ENCODE measurements at regions of chr3 and their contacts with region 1.

Region 1: DNA sequence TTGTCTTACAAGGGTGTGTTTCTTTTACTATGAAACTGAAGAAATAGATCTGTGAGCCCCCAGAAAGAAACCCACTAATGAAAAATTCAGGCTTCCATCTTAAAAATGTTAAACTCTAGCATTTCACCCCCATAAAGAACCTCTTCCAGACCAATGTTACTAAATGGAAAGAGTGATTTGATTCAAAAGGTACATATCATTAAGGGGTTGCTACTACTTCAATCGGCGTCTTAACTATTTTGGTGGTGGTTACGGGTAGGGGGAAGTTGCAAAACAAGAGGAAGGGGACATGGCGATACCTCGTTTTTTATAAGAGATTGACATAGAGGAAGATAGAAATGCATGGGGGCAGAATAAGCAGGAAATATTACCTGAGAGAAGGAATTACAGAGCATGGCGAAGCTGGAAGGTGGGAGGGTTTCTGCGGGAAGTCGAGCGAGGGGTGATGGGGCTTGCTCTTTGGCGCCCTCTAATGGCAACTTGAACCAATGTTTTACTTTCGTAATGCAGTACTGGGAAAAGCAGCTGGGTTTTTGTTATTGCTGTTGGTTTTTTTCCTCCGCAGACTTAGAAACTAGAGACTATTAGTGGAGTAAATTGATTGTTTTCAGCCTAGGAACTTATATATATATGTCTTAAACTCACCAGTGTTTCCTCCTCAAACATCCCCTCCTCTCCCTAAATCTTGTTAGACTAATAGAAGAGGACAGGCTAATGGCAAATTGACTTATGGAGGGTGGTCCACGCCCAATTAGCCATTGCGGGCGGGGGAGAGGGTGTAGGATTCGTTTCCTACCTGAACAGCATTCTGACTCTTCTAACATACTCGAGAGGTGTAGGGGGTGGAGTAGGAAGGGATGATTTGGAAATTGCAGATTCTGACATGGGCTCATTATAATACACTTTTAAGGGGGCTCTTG is 11.3 kb upstream of the SOX2 start:
- DNase-seq: peak; percentile 78
- H3K4me3 ChIP-seq: peak overlapping the region; percentile 55
- H3K27ac ChIP-seq: no peak overlapping the region
- H3K4me1 ChIP-seq: no peaks in the 10 kb centered on the region; the same call in 1 of the 2 replicates
- H3K27me3 ChIP-seq: peaks cover 70% of the 10 kb centered on the region

Region 2: DNA sequence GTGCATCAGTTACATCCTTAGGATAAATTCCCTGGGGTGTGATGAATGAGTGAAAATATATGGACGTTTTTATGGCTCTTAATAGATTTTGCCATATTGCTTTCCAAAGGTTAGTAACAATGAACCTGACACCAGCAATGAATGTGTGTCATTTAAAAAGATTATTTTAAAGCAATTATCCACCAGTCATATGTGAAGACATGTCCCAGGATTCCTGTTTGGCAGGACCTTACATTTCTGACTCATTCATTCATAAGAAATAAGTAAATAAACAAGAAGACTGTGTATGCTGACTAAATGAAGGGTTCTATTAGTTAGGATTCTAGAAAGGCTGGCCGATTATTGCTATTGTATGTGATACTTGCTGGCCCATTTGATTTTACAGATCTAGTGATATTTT is 212.8 kb after region 1 on chr3:
- in situ Hi-C with region 1: no loop called
- DNase-seq: no peak
- H3K4me3 ChIP-seq: no peak overlapping the region
- H3K27ac ChIP-seq: no peak overlapping the region
- H3K4me1 ChIP-seq: no peaks in the 10 kb centered on the region
- H3K27me3 ChIP-seq: no peaks in the 10 kb centered on the region

Region 3: GRCh38 chr3:181948286-181948685 is 247.9 kb after region 1 on chr3:
- in situ Hi-C with region 1: no loop called
- DNase-seq: no peak
- H3K4me3 ChIP-seq: no peak overlapping the region
- H3K27ac ChIP-seq: no peak overlapping the region
- H3K4me1 ChIP-seq: no peaks in the 10 kb centered on the region
- H3K27me3 ChIP-seq: no peaks in the 10 kb centered on the region

Region 4: DNA sequence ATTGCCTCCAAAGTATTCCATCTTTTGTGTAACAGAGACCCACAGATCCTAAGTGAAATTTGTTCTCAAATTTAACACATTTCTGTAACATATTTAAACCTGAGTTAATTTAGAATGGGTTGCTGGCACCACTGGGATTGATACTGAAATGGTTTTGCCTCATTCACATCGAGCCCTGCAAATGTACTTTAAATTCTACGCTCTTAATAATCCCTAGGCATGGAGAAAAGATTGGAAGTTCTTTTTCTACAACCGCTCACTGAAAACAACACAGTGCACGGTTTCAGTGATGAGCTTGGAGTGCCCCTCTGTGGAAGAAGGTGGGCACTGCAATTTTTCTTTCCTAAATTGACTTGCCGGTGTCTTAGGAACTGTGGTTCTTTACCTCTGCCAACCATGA is 983.0 kb after region 1 on chr3:
- in situ Hi-C with region 1: loop called (anchors 10 kb)
- DNase-seq: peak; percentile 79
- H3K4me3 ChIP-seq: peak overlapping the region; percentile 81
- H3K27ac ChIP-seq: no peak overlapping the region
- H3K4me1 ChIP-seq: no peaks in the 10 kb centered on the region
- H3K27me3 ChIP-seq: peaks cover 39% of the 10 kb centered on the region